WTC11 (cell line): ENCODE measurements at regions of chr1 and their contacts with region 1.

Region 1: GRCh38 chr1:48572646-48573261 is 100.8 kb upstream of the SPATA6 start:
- DNase-seq: peak; percentile 87
- ATAC-seq: peak; percentile 99
- H3K4me3 Mint-ChIP-seq: no peak overlapping the region
- H3K27ac Mint-ChIP-seq: no peak overlapping the region
- H3K4me1 Mint-ChIP-seq: 0 out of 2 replicates have a peak, but pooled peaks cover 3% of the 10 kb centered on the region
- H3K27me3 Mint-ChIP-seq: no peaks in the 10 kb centered on the region; the same call in none of the 2 replicates
- CTCF ChIP-seq: peak; percentile 61

Region 2: DNA sequence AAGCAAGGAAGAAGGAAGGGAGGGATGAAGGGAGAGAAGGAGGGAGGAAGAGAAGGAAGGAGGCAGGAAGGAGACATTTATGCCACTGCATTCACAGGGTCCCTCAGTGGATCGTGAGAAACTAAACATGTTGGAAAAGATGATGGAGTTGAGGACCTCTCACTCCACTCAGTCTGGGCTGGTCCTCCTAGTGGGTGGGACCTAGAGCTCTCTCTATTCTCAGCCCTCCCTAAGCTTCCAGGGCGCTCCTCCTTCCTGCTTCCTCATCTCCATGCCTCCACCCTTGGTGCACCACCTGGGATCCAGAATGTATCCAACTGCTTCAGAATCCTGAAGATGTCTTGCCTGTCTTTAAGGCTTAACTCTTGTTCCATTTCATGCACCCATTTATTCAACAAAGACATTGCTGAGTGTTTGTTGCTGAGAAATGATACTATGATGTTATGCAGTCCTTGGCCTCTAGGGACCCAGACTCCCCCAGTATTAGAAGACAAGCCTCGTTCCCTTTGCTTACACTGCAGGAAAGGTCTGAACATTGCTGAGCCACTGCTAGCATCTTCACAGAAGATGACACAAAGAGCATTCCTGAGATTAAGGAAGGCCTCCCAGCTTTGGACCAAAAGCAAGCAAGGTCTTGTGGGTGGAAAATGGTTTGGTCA is 115.5 kb after region 1 on chr1:
- CTCF ChIA-PET with region 1: interaction called, 14 read pairs
- POLR2A ChIA-PET with region 1: no interaction called
- DNase-seq: no peak
- ATAC-seq: peak; percentile 92
- H3K4me3 Mint-ChIP-seq: no peak overlapping the region
- H3K27ac Mint-ChIP-seq: no peak overlapping the region
- H3K4me1 Mint-ChIP-seq: peaks cover 15% of the 10 kb centered on the region
- H3K27me3 Mint-ChIP-seq: no peaks in the 10 kb centered on the region; the same call in 1 of the 2 replicates
- CTCF ChIP-seq: peak; percentile 51; the same call in 1 of the 2 replicates

Region 3: DNA sequence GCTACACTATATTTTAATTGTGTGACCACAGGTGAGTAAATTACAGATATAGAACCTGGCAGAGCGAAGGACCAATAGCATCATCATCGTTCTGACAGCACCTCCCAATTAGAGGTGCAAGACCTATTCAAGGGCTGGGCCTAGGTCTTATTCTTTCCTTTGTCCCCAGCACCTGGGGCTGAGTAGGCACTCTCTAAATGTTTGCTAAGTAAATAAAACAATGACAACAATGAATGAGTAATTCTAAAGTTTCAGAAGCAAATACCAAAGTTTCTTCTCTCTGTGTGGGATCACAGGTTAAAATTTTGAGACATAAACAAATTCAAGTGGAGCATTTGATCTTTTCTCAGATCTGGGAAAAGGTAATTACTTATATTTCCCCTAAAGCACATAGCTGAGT is 171.3 kb after region 1 on chr1:
- CTCF ChIA-PET with region 1: interaction called, 11 read pairs
- POLR2A ChIA-PET with region 1: no interaction called
- DNase-seq: no peak
- ATAC-seq: no peak
- H3K4me3 Mint-ChIP-seq: no peak overlapping the region
- H3K27ac Mint-ChIP-seq: no peak overlapping the region
- H3K4me1 Mint-ChIP-seq: peaks cover 20% of the 10 kb centered on the region
- H3K27me3 Mint-ChIP-seq: no peaks in the 10 kb centered on the region
- CTCF ChIP-seq: no peak

Region 4: DNA sequence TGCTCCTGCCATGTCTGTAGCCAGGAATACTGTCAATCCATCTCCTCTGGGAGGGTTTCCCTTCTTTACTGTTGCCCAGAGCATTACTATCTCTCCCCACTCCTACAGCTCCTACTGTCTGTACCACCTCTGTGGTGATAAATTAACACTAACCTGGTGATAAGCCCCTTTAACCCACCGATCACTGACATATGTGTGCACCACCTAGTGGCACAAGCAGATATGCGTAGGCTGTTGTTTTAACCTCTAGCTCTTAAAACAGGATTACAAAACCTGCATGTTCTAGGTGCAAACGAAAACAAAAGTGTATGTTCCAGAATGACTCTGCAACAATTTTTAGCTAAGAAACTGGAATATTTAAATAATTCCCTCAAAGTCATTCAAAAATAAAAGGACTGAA is 297.8 kb after region 1 on chr1:
- CTCF ChIA-PET with region 1: interaction called, 16 read pairs
- POLR2A ChIA-PET with region 1: no interaction called
- DNase-seq: peak; percentile 26
- ATAC-seq: peak; percentile 50
- H3K4me3 Mint-ChIP-seq: no peak overlapping the region
- H3K27ac Mint-ChIP-seq: no peak overlapping the region
- H3K4me1 Mint-ChIP-seq: peaks cover 33% of the 10 kb centered on the region
- H3K27me3 Mint-ChIP-seq: no peaks in the 10 kb centered on the region
- CTCF ChIP-seq: peak; percentile 38; the same call in 1 of the 2 replicates